ENCODE measurements at regions of chr17 and their contacts with region 1.

Region 1: DNA sequence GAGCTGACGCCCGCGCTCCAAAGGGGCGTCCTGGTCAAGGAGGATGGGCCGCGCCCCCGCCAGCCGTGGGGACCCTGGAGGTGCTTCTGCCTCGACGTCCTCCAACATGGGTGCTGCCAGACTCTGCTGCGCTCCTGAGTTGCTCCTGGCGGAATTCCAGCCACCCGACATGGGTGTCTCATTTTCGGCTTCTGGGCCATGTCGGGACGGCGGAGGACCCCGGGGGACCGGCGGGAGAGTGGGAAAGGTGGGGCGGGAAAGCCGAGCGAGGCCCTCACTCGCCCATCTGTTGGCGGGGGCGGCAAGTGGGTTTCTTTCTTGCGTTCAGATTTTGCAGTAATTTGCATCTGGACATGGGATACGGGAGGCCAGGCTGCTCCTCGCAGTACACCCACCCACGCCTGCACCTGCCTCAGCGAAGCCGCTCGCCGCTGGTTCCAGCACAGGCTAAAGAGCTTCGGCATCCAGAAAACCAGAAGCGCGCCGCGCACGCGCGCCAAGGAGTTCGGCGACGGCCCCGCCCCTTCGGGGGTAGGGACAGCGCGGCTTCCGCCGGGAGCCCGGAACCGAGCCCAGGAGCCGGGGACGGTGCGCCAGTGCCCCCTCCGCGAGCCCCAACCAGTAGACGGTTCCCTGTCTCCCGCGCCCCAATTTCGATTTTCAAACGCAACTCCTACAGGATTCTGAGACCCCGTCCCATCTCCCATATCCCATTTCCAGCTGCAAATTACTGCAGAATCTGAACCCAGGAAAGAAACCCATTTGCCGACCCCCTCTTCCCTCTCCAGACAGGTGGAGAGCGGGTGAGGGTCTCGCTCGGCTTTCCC is at the start of gene ARMC7:
- DNase-seq: no peak
- H3K4me3 ChIP-seq: peak within 1 kb of the TSS; percentile 79
- CTCF ChIP-seq: no peak

Region 2: GRCh38 chr17:74748529-74749365 is 360.9 kb before region 1 on chr17 and contains the start of gene NHERF1:
- CTCF ChIA-PET with region 1: no interaction called
- POLR2A ChIA-PET with region 1: no interaction called
- DNase-seq: peak; percentile 38
- H3K4me3 ChIP-seq: peak within 1 kb of the TSS; percentile 76
- CTCF ChIP-seq: peak; percentile 18

Region 3: DNA sequence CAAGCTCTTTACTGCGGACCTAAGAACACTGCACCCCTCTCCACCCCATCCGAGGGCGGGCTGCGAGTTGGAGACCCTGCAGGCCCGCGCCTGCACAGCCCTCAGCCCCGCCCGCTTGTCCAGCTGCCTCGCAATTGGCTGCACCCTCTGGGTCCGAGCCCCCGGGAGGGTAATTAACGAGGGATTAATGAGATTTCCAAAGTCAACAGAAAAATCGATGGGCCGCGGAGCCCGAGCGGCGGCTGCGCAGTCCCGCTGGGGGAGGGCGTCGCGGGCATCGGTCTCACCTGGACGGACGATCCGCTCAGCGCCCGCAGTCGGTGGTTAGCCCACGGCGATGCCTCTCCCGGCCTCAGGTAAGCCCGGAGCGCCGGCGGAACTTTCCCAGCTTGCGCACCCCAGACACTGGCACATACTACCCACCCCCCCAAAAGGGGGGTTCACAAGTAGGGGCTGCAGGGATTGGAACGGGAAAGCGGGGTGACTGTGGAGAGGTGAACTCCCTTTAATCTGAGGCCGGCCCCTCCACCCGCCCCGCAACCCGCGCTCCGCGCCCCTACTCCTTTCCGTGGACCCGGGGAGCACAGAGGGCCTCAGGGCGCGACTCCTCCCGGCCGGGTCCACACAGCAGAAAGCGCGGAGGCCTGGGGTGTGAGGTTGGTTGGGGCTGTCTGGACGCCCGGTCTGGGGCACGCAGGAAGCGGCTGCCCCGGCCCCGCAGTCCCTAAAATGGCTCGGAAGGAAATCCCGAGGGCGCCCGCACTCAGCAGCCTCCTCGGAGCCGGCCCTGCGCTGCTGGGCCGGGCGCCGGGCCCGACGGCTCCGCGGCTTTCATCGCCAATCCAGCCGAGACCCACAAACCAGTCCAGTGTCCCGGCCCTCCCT is 173.8 kb before region 1 on chr17 and contains the start of gene OTOP3:
- CTCF ChIA-PET with region 1: no interaction called
- POLR2A ChIA-PET with region 1: no interaction called
- DNase-seq: no peak
- H3K4me3 ChIP-seq: no peak within 1 kb of the TSS
- CTCF ChIP-seq: no peak

Region 4: DNA sequence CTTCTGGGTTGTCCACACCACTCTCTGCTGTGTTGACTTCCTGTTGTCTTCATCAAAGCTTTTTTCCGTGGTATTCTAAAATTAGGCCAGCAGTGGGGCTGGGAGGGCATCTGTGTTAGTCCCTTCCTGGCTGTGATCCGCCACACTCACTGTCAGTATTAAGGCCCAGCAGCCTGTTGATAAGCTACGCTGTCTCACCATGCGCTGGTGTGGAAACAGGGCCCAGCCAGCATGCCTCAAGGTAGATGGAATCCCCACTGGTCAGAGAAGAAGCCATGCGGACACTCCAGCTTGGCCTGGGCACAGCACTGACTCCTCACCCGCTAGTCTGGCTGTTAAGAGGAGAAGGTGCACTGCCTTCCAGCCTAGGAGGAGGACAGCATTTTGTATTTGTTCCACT is 110.8 kb before region 1 on chr17:
- CTCF ChIA-PET with region 1: no interaction called
- POLR2A ChIA-PET with region 1: no interaction called
- DNase-seq: no peak
- H3K4me3 ChIP-seq: no peak overlapping the region
- CTCF ChIP-seq: no peak

Region 5: DNA sequence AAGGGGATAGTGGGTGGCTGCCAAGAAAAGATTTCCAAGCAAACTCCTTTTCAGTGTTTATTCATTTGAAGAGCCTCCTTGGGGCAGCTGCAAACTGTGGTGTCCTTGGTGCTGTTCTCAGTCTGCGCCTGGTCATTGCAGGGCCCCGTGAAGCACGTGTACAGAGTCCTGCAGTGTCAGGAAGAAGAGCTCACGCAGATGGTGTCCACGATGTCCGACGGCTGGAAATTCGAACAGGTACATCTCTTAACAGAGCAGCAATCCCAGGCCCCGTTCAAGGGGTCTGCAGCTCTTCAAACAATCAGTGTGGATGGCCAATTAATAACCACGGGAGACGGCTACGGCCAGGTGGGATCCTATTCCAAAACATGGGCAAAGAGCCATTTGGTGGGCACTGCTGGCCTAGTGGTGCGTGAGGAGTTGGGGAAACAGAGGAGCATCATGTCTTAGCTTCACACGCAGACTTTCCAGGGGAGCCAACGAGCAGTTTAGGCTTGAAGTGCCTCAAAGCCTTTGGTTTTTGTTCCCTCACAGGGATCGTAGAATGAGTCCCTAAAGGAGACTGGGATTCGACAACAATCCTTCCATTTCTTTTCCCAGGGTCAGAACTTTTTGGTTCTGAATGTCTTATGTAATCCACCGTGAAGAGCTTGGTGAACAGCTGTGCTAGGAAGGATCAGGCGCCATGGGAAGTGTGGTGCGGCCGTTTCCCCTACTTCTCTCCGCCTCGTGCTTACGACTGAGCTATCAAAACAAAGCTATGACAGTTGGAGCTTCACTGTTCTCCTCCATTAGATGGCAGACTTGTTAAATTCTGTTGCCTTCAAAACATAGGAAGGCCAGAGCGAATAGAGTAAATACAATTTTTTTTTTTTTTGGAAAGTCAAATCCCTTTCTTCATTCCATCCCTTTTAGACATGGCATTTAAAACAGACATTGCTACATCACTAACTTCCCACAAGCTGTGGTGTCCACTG is 50.0 kb before region 1 on chr17:
- CTCF ChIA-PET with region 1: interaction called, 146 read pairs
- POLR2A ChIA-PET with region 1: no interaction called
- DNase-seq: no peak
- H3K4me3 ChIP-seq: no peak overlapping the region
- CTCF ChIP-seq: peak; percentile 53

Region 6: DNA sequence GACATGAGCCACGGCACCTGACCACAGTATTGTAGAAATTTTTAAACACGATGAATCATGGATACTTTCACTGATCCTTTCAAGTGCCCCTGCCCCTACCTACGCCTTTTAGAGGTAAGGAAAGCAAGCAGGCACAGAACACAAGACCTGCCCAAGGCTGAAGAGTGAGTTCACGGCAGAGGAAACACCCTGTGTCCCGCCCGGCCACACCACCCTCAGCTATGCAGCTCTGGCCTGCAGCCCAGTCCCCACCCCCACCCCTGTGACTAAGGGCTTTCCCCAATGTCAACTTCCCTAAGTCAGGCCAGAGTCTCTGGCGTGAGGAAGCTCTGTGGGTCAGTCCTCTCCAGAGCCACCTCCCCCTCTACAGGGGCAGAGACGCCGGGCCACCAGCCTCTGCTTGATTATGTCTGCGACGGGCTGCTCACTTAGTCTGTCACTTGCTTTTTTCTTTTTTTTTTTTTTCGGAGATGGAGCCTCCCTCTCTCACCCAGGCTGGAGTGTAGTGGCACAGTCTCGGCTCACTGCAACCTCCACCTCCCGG is 13.5 kb before region 1 on chr17:
- CTCF ChIA-PET with region 1: interaction called, 43 read pairs
- POLR2A ChIA-PET with region 1: interaction called, 4 read pairs
- DNase-seq: no peak
- H3K4me3 ChIP-seq: no peak overlapping the region
- CTCF ChIP-seq: no peak

Region 7: DNA sequence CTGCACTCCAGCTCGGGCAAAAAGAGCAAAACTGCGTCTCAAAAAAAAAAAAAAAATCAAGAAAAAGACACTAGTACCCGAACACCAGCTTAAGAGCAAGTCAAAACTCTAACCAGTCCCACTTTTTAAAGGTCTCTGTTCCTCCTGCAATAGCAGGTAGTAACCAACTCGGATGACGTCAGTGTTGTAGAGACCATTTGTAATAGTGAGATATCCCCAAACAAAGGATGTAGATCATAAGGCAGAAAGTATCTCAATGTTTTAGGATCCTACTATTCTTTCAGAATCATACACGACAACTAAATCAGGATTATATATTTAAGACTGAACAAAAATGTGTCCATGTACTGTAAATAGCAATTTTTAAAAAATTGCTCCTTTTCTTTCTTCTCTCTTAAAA is 42.3 kb after region 1 on chr17:
- CTCF ChIA-PET with region 1: interaction called, 18 read pairs
- POLR2A ChIA-PET with region 1: no interaction called
- DNase-seq: no peak
- H3K4me3 ChIP-seq: no peak overlapping the region; the same call in 1 of the 2 replicates
- CTCF ChIP-seq: no peak

Region 8: GRCh38 chr17:75205037-75205792 is 95.6 kb after region 1 on chr17 and contains the start of gene NUP85:
- CTCF ChIA-PET with region 1: interaction called, 231 read pairs
- POLR2A ChIA-PET with region 1: no interaction called
- DNase-seq: peak; percentile 31
- H3K4me3 ChIP-seq: peak within 1 kb of the TSS; percentile 100
- CTCF ChIP-seq: no peak

Region 9: DNA sequence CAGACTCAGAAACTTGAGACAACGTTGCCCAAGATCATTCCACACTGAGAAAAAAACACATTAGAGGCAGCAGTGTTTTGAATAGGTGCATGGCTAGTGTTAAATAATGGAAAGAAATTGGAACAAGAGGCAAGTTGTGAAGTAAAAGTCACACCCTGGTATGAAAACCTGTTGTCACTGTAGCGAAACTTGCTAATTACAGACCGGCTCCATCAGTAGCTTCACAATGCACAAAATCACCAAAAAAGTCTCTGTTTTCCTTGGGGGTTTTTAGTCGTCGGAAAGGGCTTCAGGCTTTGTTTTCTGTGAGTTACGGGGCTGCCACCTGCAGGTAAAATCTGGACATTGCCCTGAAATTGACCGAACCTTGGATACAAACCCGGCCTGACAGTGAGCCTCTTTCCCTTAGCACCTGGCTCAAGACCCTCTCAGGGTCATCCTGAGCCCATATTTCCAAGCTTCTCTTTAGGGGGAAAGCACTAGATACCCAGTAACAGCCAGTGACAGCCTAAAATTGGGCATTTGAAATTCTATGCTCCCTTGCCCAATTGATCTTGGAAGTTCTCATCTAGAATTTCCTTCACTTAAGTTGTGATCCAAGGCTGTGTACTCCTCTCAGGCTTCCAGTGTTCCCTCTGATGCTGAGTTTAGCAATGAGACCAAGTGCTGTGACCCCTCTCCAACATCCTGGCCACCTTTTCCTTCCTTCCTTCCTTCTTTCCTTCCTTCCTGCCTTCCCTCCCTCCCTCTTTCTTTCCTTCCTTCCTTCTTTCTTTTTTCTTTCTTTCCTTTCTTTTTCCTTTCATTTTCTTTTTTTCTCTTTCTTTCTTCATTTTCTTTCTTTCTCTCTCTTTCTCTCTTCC is 303.1 kb after region 1 on chr17:
- CTCF ChIA-PET with region 1: interaction called, 27 read pairs
- POLR2A ChIA-PET with region 1: no interaction called
- DNase-seq: no peak
- H3K4me3 ChIP-seq: peak overlapping the region; percentile 20
- CTCF ChIP-seq: peak; percentile 83

Region 10: DNA sequence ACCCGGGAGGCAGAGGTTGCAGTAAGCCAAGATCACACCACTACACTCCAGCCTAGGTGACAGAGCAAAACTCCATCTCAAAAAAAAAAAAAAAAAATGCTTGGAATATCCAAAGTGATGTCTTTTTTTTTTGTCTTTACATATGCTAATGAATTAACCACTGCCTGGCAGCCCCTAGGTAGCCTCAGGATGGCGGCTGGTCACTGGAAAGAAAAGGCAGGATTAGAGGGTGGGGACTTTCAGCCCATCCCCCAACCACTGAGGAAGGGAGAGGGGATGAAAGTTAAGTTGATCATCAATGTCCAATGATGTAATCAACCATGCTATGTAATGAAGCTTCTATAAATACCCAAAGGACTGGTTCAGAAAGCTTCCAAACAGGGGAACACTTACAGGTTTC is 1103.9 kb after region 1 on chr17:
- CTCF ChIA-PET with region 1: no interaction called
- POLR2A ChIA-PET with region 1: no interaction called
- DNase-seq: no peak
- H3K4me3 ChIP-seq: no peak overlapping the region
- CTCF ChIP-seq: no peak